Prostate gland (tissue), 2 donors: ENCODE measurements at regions of chr16 and their contacts with region 1.

Region 1: DNA sequence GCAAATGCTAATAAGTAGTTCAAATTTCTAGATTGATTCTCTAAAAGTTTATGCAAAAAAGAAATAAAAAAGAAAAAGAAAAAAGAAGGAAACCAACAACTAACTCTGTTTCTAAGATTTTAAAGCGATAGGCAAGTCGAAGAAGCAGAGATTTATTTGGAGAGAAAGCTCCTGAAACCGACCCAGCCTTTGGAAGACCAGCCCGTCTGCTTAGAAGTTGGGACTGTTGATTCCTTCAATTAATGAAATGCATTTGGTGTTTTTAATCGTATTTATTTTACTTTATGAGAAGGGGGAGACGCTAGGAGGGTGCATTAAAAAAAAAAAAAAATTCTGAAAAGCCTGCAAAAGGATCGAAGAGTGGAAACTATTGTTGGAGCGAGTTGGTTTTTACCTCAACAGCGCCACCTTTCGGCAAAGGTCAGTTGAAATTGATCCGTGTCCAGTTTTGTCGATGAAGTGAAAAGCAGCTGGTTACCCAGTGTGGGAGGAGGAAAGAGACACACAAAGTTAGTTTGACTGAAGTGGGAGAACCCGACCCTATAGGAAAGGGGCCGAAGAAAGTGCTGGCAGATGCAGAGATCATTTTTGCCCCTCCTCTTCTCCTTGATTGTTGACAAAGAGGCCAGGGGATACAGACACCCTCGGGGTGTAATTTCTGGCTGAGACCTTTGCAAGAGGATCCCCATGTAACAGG is 1.5 kb upstream of the MAF start:
- DNase-seq: peak; percentile 79
- H3K4me3 ChIP-seq: peak overlapping the region; percentile 76 to 94
- H3K27ac ChIP-seq: peak overlapping the region; percentile 87 to 92
- H3K4me1 ChIP-seq: no peaks in the 10 kb centered on the region
- H3K27me3 ChIP-seq: no peaks in the 10 kb centered on the region
- CTCF ChIP-seq: peak; percentile 72 to 89 (median 79)
- POLR2A ChIP-seq: no peak

Region 2: DNA sequence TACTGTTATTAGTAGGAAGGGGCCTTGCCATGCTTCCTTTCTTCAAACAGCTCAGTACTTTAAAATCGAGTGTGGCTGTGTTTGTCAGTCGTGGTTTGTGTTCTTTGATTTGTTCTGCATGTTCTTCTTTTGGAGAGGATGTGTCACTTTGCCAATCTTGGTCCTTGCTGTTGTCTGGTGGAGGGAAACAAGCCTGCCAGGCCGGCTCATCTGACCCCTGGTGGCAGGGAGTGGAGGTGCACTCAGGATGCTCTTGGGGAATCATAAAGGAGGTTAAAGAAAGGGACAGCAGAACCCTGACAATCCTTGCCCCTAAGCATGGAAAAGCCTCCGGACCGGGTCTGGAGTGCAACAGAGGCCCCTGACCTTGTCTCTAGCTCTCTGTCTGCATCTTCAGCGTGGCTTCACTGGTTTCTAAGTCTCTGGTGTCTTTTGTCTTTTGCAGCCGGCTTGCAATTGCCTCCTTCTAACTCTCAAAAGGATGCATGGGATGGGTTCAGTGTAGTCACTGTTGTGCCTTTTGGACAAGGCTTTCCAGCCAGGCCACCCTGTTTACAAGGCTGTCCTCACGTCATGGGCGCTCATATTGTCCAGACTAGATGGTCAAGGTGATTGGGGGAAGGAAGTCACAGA is 1366.8 kb before region 1 on chr16:
- intact Hi-C with region 1: loop called (anchors 10 kb)
- DNase-seq: peak; percentile 68
- H3K4me3 ChIP-seq: no peak overlapping the region
- H3K27ac ChIP-seq: no peak overlapping the region
- H3K4me1 ChIP-seq: peaks cover 4% of the 10 kb centered on the region
- H3K27me3 ChIP-seq: no peaks in the 10 kb centered on the region
- CTCF ChIP-seq: peak; percentile 62 to 90 (median 79)
- POLR2A ChIP-seq: no peak

Region 3: GRCh38 chr16:79071424-79071823 is 530.7 kb before region 1 on chr16:
- intact Hi-C with region 1: loop called (anchors 5 kb)
- DNase-seq: peak; percentile 82
- H3K4me3 ChIP-seq: no peak overlapping the region
- H3K27ac ChIP-seq: peak overlapping the region; percentile 7 to 20
- H3K4me1 ChIP-seq: no peaks in the 10 kb centered on the region
- H3K27me3 ChIP-seq: no peaks in the 10 kb centered on the region
- CTCF ChIP-seq: no peak
- POLR2A ChIP-seq: no peak

Region 4: GRCh38 chr16:79767421-79768275 is 165.6 kb after region 1 on chr16:
- intact Hi-C with region 1: loop called (anchors 5 kb)
- DNase-seq: peak; percentile 47
- H3K4me3 ChIP-seq: peak overlapping the region; percentile 23
- H3K27ac ChIP-seq: peak overlapping the region; percentile 85 to 89
- H3K4me1 ChIP-seq: peaks cover 25% of the 10 kb centered on the region
- H3K27me3 ChIP-seq: no peaks in the 10 kb centered on the region
- CTCF ChIP-seq: peak in 1 of 4 experiments; percentile 36
- POLR2A ChIP-seq: peak; percentile 9

Region 5: DNA sequence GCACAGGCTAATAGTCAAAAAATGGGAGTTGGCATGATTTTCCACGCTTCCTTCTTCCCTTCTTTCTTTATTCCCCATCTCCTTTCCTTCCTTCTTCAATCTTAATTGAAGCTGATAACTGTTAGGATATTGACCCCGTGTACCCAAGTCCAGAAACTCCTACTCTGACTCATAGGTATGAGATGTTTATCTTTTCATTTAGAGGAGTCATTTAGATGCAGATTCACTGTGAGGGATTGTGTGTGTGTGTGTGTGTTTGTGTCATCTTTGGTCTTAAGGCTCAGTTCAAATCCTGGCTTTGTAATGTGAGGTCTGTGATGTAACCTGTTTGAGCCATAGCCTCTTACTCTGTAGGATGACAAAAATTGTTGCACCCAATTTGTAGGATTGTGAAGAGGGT is 330.5 kb after region 1 on chr16:
- intact Hi-C with region 1: loop called (anchors 5 kb)
- DNase-seq: no peak
- H3K4me3 ChIP-seq: no peak overlapping the region
- H3K27ac ChIP-seq: no peak overlapping the region
- H3K4me1 ChIP-seq: no peaks in the 10 kb centered on the region
- H3K27me3 ChIP-seq: no peaks in the 10 kb centered on the region
- CTCF ChIP-seq: no peak
- POLR2A ChIP-seq: no peak

Region 6: DNA sequence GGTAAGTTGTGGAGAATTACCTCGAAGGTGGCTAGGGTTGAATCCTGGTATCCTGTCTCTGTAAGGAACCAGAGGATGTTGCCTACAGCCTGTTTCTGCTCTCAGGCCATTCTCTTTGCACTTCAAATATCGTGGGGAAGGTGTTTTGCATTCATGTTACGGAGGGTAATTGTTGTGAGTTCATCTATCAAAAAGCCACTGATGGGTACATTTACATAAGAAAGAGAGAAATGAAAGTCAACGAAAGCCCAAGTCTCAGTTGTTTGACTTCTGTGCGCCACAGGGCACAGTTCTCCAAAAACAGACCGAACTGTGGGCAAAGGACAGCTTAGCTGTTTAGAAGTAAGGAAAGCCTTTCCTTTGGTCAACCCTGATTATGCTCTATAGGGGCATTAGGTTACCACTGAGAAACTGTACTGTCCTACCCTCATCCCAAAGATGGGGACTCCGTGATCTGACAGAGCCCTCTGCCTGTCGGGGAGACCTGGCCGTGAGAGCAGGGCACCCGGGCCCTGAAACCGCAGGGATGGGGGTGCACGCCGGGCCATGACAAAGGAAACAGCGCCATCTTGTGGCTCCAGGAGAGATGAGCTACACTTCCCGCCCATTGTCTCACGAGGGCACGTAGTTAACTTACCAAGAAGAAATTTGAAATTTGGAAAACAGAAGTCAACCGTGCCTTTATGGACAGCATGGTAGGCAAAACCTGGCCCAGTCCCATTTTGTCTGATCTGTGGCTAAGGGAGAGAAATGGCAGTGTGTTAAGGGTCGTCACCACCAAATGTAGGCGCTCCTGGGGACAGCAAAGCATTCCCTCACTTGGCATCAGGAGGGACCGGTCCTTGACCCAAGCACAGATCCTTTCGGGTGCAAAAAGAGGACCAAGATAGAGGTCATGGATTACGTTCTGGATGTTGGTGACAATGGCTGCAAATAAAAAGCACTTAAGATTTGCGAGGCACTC is 864.2 kb after region 1 on chr16:
- intact Hi-C with region 1: loop called (anchors 10 kb)
- DNase-seq: peak; percentile 55
- H3K4me3 ChIP-seq: no peak overlapping the region
- H3K27ac ChIP-seq: no peak overlapping the region
- H3K4me1 ChIP-seq: no peaks in the 10 kb centered on the region
- H3K27me3 ChIP-seq: no peaks in the 10 kb centered on the region
- CTCF ChIP-seq: peak; percentile 68 to 82 (median 78)
- POLR2A ChIP-seq: no peak